IMR-90 (cell line): ENCODE measurements at regions of chr18 and their contacts with region 1.

Region 1: DNA sequence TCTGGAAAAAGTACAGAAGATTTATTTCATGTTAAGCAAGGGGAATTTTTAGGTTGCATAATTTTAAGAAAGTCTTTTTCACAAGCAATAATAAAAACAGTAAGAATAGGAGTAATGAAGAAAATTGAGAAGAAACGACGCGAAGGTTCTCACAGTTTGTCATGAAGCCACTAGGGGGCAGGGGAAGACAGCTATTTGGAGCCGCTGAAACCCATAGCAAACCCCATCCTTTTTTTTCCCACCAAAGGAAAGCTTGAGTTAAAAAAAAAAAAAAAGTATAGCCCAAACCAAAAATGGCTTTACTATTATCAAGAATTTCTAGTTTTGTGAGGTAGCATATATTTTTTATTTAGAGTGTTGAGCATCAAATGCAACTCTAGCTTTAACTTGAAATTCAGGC is 300.9 kb downstream of the PHLPP1 start:
- DNase-seq: peak; percentile 59
- ATAC-seq: peak; percentile 77
- H3K4me3 ChIP-seq: no peak overlapping the region
- H3K27ac ChIP-seq: no peak overlapping the region
- H3K4me1 ChIP-seq: no peaks in the 10 kb centered on the region
- H3K27me3 ChIP-seq: peaks cover 12% of the 10 kb centered on the region
- CTCF ChIP-seq: peak; percentile 92
- POLR2A ChIP-seq: no peak
- RAD21 ChIP-seq: peak; percentile 86

Region 2: GRCh38 chr18:63079114-63079513 is 62.8 kb after region 1 on chr18:
- CTCF ChIA-PET with region 1: no interaction called
- POLR2A ChIA-PET with region 1: no interaction called
- dilution Hi-C with region 1: no loop called
- in situ Hi-C with region 1: no loop called
- intact Hi-C with region 1: no loop called
- DNase-seq: no peak
- ATAC-seq: no peak
- H3K4me3 ChIP-seq: no peak overlapping the region
- H3K27ac ChIP-seq: no peak overlapping the region
- H3K4me1 ChIP-seq: no peaks in the 10 kb centered on the region
- H3K27me3 ChIP-seq: peaks cover 2% of the 10 kb centered on the region
- CTCF ChIP-seq: no peak
- POLR2A ChIP-seq: no peak
- RAD21 ChIP-seq: no peak

Region 3: DNA sequence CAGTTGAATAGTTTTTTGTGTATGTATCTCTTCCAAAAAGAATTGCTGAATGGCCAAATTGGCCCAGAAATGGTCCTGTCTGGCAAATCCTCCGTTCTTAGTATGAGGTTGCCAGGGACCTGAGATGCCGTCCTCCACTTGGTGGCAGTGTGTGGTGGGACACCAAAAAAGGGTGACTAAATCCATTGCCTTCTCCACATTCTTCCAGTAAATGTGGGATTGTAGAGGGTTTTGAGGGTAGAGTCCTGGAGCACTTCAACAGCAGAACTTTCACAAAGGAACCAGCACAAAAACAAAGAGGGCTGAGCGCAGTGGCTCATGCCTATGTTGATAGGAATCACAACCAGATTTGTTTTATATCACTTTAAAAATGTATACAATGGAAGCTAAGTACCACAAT is 103.4 kb after region 1 on chr18:
- CTCF ChIA-PET with region 1: interaction called, 4 read pairs
- POLR2A ChIA-PET with region 1: no interaction called
- dilution Hi-C with region 1: no loop called
- in situ Hi-C with region 1: no loop called
- intact Hi-C with region 1: loop called (anchors 5 kb)
- DNase-seq: peak; percentile 8
- ATAC-seq: no peak; the same call in 1 of the 2 replicates
- H3K4me3 ChIP-seq: no peak overlapping the region
- H3K27ac ChIP-seq: no peak overlapping the region
- H3K4me1 ChIP-seq: no peaks in the 10 kb centered on the region
- H3K27me3 ChIP-seq: peaks cover 9% of the 10 kb centered on the region
- CTCF ChIP-seq: peak; percentile 34; the same call in 1 of the 2 replicates
- POLR2A ChIP-seq: no peak
- RAD21 ChIP-seq: peak; percentile 38

Region 4: GRCh38 chr18:63131106-63131958 is 115.1 kb after region 1 on chr18:
- CTCF ChIA-PET with region 1: interaction called, 3 read pairs
- POLR2A ChIA-PET with region 1: no interaction called
- dilution Hi-C with region 1: no loop called
- in situ Hi-C with region 1: no loop called
- intact Hi-C with region 1: loop called (anchors 2 kb)
- DNase-seq: peak; percentile 59
- ATAC-seq: peak; percentile 81
- H3K4me3 ChIP-seq: no peak overlapping the region
- H3K27ac ChIP-seq: no peak overlapping the region
- H3K4me1 ChIP-seq: no peaks in the 10 kb centered on the region
- H3K27me3 ChIP-seq: peaks cover 14% of the 10 kb centered on the region
- CTCF ChIP-seq: peak; percentile 75
- POLR2A ChIP-seq: no peak
- RAD21 ChIP-seq: peak; percentile 71

Region 5: GRCh38 chr18:63439334-63439733 is 423.1 kb after region 1 on chr18:
- CTCF ChIA-PET with region 1: interaction called, 5 read pairs
- POLR2A ChIA-PET with region 1: interaction called, 5 read pairs
- dilution Hi-C with region 1: no loop called
- in situ Hi-C with region 1: loop called (anchors 5 kb)
- intact Hi-C with region 1: loop called (anchors 1 kb)
- DNase-seq: peak; percentile 70
- ATAC-seq: peak; percentile 95
- H3K4me3 ChIP-seq: no peak overlapping the region
- H3K27ac ChIP-seq: no peak overlapping the region
- H3K4me1 ChIP-seq: no peaks in the 10 kb centered on the region
- H3K27me3 ChIP-seq: peaks cover 7% of the 10 kb centered on the region
- CTCF ChIP-seq: peak; percentile 85
- POLR2A ChIP-seq: no peak
- RAD21 ChIP-seq: peak; percentile 77

Region 6: DNA sequence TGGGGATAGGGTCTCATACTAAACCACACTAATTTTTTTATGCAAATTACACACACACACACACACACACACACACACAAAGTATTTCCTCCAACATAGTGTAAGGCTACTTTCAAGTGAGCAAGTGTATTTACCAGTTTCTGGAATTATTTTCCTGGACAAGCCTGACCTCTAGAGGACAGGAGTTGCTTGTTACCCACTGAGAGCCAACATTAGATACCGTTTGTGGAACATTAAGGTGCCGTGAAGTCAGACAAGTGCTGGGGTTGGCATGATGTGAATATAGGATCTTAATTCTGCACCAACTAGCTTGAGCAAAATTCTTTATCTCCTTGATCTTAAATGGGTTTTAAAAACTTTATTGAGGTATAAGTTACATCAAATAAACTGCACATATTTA is 831.9 kb after region 1 on chr18:
- CTCF ChIA-PET with region 1: no interaction called
- POLR2A ChIA-PET with region 1: no interaction called
- dilution Hi-C with region 1: no loop called
- in situ Hi-C with region 1: no loop called
- intact Hi-C with region 1: loop called (anchors 10 kb)
- DNase-seq: peak; percentile 75
- ATAC-seq: peak; percentile 79
- H3K4me3 ChIP-seq: no peak overlapping the region
- H3K27ac ChIP-seq: no peak overlapping the region
- H3K4me1 ChIP-seq: no peaks in the 10 kb centered on the region
- H3K27me3 ChIP-seq: no peaks in the 10 kb centered on the region; the same call in 1 of the 2 replicates
- CTCF ChIP-seq: peak; percentile 77
- POLR2A ChIP-seq: no peak
- RAD21 ChIP-seq: peak; percentile 83